ENCODE measurements at regions of chr11 and their contacts with region 1.

Region 1: GRCh38 chr11:57644748-57645688 is 4.7 kb downstream of the YPEL4 start:
- DNase-seq: peak; percentile 77 to 91 (median 83)
- H3K4me3 ChIP-seq: no peak overlapping the region
- H3K27ac ChIP-seq: peak overlapping the region; percentile 7 to 59
- H3K4me1 ChIP-seq: peaks cover 29% of the 10 kb centered on the region
- H3K27me3 ChIP-seq: no peaks in the 10 kb centered on the region
- CTCF ChIP-seq: peak; percentile 67 to 81 (median 70)
- EP300 ChIP-seq: no peak
- POLR2A ChIP-seq: no peak

Region 2: GRCh38 chr11:57324886-57325734 is 319.9 kb before region 1 on chr11 and contains the start of gene TNKS1BP1:
- intact Hi-C with region 1: loop called in 2 of 4 experiments (anchors 10 kb)
- DNase-seq: peak; percentile 97 to 99 (median 98)
- H3K4me3 ChIP-seq: peak within 1 kb of the TSS; percentile 63
- H3K27ac ChIP-seq: peak within 1 kb of the TSS; percentile 94 to 98
- H3K4me1 ChIP-seq: peaks cover 23% of the 10 kb centered on the region
- H3K27me3 ChIP-seq: no peaks in the 10 kb centered on the region
- CTCF ChIP-seq: peak in 1 of 3 donors; percentile 24
- EP300 ChIP-seq: peak; percentile 6
- POLR2A ChIP-seq: peak; percentile 73
- total RNA-seq, gene TNKS1BP1: 45.2 to 230 (median 149) TPM

Region 3: GRCh38 chr11:57567515-57568329 is 77.3 kb before region 1 on chr11 and contains the start of gene UBE2L6:
- intact Hi-C with region 1: loop called (anchors 2 to 5 kb)
- DNase-seq: peak; percentile 64 to 82 (median 74)
- H3K4me3 ChIP-seq: peak within 1 kb of the TSS; percentile 76
- H3K27ac ChIP-seq: peak within 1 kb of the TSS; percentile 78 to 85
- H3K4me1 ChIP-seq: peaks cover 10% of the 10 kb centered on the region
- H3K27me3 ChIP-seq: no peaks in the 10 kb centered on the region
- CTCF ChIP-seq: peak in 2 of 3 donors; percentile 90 to 93
- EP300 ChIP-seq: no peak
- POLR2A ChIP-seq: peak; percentile 51
- total RNA-seq, gene UBE2L6: 27.2 to 71.0 (median 59.7) TPM

Region 4: GRCh38 chr11:57588046-57588710 is 56.8 kb before region 1 on chr11:
- intact Hi-C with region 1: no loop called
- DNase-seq: no peak
- H3K4me3 ChIP-seq: no peak overlapping the region
- H3K27ac ChIP-seq: no peak overlapping the region
- H3K4me1 ChIP-seq: no peaks in the 10 kb centered on the region
- H3K27me3 ChIP-seq: no peaks in the 10 kb centered on the region
- CTCF ChIP-seq: no peak
- EP300 ChIP-seq: no peak
- POLR2A ChIP-seq: no peak

Measured in ovary (tissue), 10 donors.